GM18951 (cell line): ENCODE measurements at regions of chr17 and their contacts with region 1.

Region 1: GRCh38 chr17:7716901-7717755 is at the start of gene DNAH2:
- POLR2A ChIP-seq: no peak

Region 2: DNA sequence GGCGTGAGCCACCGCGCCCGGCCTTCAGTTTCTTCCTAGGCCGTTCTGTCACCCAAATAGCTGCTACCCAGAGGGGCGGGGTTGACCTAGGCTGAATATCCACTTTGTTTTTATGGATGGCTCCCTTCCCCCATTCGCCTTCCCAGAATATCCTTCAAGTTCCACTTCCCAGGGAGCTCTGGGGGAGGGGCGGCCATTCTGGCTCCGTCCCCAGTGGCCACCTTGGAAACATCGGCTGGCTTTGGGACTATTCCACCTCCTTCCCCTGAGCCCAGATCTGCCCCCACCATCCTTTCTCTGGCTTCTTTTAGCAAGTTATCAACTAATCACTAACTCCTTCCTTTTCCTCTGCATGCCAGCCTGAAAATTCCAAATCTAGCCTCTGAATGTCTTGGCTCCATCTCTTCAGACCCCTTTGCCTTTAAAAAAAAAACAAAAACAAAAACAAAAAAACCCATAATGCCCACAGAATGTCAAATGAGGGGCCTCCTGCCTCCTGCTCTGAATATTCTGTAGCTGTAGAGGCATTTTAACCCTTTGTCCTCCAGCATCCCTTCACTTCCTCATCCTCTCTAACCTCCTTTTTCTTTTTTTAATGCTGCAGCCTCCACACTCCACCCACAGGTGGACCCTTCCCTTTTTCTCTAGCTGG is 60.0 kb before region 1 on chr17:
- in situ Hi-C with region 1: loop called (anchors 5 kb)
- POLR2A ChIP-seq: no peak